CD8-positive, alpha-beta T cell (primary cell): ENCODE measurements at regions of chr4 and their contacts with region 1.

Region 1: DNA sequence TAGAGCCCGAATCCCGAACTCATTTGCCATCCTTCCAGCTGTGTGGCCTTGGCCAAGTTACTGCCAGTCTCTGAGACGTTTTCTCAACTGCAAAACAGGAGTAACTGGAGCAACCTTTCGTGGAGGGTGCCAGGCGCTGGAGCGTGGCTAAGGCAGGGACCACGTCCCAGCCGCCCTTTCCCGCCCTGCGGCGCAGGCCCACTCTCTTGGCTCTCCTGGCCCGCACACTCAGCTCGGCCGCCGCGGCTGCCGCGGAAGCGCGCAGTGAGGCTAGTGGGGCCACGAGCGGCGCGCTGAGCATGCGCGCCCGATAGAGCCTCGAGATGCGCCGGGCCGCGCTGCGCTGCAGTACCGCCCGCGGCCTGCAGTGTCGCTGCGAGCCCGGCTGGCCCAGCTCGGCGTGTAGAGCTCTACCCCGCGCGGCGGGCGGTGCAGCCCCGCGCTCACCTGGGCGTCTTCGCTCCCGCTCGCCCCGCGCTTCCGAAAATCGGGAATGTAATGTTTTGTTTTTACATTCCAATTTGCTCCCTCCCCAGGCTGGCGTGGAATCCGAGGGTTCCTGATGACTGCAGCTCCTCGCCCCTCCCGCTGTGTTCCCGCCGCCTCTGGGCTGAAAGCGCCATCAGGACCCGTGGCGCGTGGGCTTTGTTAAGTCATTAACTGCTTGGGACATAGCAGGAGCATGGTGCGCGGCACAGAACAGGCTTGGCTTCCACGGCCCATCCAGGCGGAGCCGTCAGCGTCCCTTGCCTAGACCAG is 4.0 kb upstream of the ZNF518B start:
- DNase-seq: peak; percentile 53 to 92 (median 68)
- ATAC-seq: peak; percentile 82
- H3K4me3 ChIP-seq: peak overlapping the region; percentile 43 to 55
- H3K4me3 Mint-ChIP-seq: peak overlapping the region; percentile 83
- H3K27ac ChIP-seq: no peak overlapping the region
- H3K27ac Mint-ChIP-seq: no peak overlapping the region
- H3K4me1 ChIP-seq: peaks cover 20% of the 10 kb centered on the region
- H3K4me1 Mint-ChIP-seq: peaks cover 28% of the 10 kb centered on the region
- H3K27me3 ChIP-seq: peaks cover 0 to 11% of the 10 kb centered on the region in 2 experiments
- H3K27me3 Mint-ChIP-seq: peaks cover 29% of the 10 kb centered on the region
- CTCF ChIP-seq: peak; percentile 99

Region 2: DNA sequence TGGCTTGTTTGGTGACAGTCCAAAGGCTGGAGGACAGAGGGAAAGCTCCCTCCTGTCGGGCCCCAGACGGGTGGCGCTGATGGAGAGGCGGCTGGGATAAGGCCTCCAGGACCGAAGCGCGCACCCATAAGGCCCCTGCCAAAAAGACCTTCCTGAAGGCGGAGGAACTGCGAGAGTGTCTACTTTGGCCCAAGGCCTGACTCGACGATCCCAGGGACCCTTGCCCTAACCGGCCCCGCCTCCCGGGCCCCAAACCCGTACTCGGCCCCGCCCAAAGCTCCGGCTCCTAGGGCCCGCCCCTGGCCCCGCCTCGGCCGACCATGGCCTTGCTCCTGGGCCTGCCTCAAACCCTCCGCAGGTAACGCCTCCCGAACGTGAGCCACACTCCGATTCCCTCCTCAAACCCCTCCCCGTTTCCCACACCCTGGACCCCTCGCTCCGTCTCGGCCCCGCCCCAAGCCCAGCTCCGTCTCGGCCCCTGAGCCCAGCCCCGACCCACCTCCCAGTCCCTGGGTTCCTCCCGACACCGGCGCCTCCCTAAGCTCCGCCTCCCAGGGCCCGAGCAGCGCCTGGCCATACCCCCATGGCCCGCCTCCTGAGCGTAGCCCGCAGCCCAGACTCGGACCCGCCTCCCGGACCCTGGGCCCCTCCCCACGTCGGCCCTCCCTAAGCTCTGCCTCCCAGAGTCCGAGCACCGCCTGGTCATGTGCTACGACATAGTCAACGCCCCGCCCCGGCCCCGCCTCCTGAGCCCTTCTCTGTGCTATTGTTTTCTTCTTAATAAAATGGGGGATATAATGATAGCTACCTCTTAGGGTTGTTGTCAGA is 769.8 kb before region 1 on chr4:
- CTCF ChIA-PET with region 1: no interaction called
- POLR2A ChIA-PET with region 1: no interaction called
- intact Hi-C with region 1: loop called in 1 of 2 experiments (anchors 2 kb)
- DNase-seq: peak; percentile 79 to 96 (median 89)
- ATAC-seq: peak; percentile 99
- H3K4me3 ChIP-seq: peak overlapping the region; percentile 72 to 75
- H3K4me3 Mint-ChIP-seq: peak overlapping the region; percentile 88
- H3K27ac ChIP-seq: peak overlapping the region; percentile 55 to 76
- H3K27ac Mint-ChIP-seq: peak overlapping the region; percentile 76
- H3K4me1 ChIP-seq: peaks cover 8% of the 10 kb centered on the region
- H3K4me1 Mint-ChIP-seq: peaks cover 28% of the 10 kb centered on the region
- H3K27me3 ChIP-seq: no peaks in the 10 kb centered on the region
- H3K27me3 Mint-ChIP-seq: no peaks in the 10 kb centered on the region
- CTCF ChIP-seq: no peak

Region 3: DNA sequence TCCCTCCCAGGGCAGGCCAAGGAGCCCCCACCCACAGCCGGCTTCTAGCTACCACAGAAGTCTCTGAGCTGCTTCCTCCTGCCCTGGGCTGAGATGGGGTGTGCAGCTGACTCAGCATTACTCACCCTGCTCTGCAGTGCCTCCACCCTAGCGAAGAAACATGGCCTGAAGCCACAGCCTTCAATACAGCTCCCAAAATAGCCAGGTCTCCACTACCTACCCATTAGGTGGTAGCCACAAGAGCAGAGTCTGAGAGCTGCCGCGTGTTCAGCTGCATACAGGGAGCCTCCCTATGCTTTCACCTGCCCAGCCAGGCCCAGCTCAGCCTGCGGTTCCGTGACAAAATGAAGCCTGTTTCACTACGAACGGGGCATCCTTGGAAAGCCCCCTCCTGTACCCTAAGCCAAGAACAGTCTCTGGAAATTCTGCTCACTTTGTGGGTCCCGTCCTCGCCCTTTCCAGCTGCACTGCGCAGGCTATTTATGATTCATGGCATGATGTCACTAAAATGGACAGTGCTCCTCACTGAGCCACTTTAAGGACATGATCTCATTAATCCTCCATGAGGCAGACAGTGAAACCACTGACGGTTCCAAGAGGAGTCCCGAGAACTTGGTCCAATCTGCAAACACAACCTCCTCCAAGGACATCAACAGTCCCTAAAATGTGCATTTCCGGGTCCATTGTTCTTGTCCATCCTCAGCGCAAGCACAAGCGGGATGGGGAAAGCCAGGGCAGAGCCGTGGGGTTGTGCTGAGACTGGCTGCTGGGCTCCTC is 364.9 kb before region 1 on chr4:
- CTCF ChIA-PET with region 1: no interaction called
- POLR2A ChIA-PET with region 1: no interaction called
- intact Hi-C with region 1: loop called in 1 of 2 experiments (anchors 5 kb)
- DNase-seq: peak; percentile 46 to 90 (median 83)
- ATAC-seq: peak; percentile 75
- H3K4me3 ChIP-seq: no peak overlapping the region
- H3K4me3 Mint-ChIP-seq: peak overlapping the region; percentile 37
- H3K27ac ChIP-seq: peak overlapping the region; percentile 38 to 70
- H3K27ac Mint-ChIP-seq: peak overlapping the region; percentile 87
- H3K4me1 ChIP-seq: peaks cover 94% of the 10 kb centered on the region
- H3K4me1 Mint-ChIP-seq: peaks cover 94% of the 10 kb centered on the region
- H3K27me3 ChIP-seq: no peaks in the 10 kb centered on the region
- H3K27me3 Mint-ChIP-seq: no peaks in the 10 kb centered on the region
- CTCF ChIP-seq: no peak

Region 4: GRCh38 chr4:10164877-10165283 is 296.4 kb before region 1 on chr4:
- CTCF ChIA-PET with region 1: interaction called, 5 read pairs
- POLR2A ChIA-PET with region 1: interaction called, 4 read pairs
- intact Hi-C with region 1: loop called in 1 of 2 experiments (anchors 5 kb)
- DNase-seq: peak in 2 of 9 experiments; percentile 17 to 19
- ATAC-seq: no peak
- H3K4me3 ChIP-seq: no peak overlapping the region
- H3K4me3 Mint-ChIP-seq: no peak overlapping the region
- H3K27ac ChIP-seq: no peak overlapping the region
- H3K27ac Mint-ChIP-seq: no peak overlapping the region
- H3K4me1 ChIP-seq: peaks cover 29% of the 10 kb centered on the region
- H3K4me1 Mint-ChIP-seq: peaks cover 33% of the 10 kb centered on the region
- H3K27me3 ChIP-seq: no peaks in the 10 kb centered on the region
- H3K27me3 Mint-ChIP-seq: no peaks in the 10 kb centered on the region
- CTCF ChIP-seq: peak; percentile 49

Region 5: GRCh38 chr4:10421344-10422055 is 39.8 kb before region 1 on chr4:
- CTCF ChIA-PET with region 1: interaction called, 6 read pairs
- POLR2A ChIA-PET with region 1: interaction called, 12 read pairs
- intact Hi-C with region 1: loop called (anchors 2 to 5 kb)
- DNase-seq: peak in 3 of 9 experiments; percentile 17 to 63 (median 56)
- ATAC-seq: peak; percentile 85
- H3K4me3 ChIP-seq: no peak overlapping the region
- H3K4me3 Mint-ChIP-seq: peak overlapping the region; percentile 58
- H3K27ac ChIP-seq: peak overlapping the region in 1 of 2 experiments; percentile 43
- H3K27ac Mint-ChIP-seq: peak overlapping the region; percentile 91
- H3K4me1 ChIP-seq: peaks cover 29% of the 10 kb centered on the region
- H3K4me1 Mint-ChIP-seq: peaks cover 25% of the 10 kb centered on the region
- H3K27me3 ChIP-seq: no peaks in the 10 kb centered on the region
- H3K27me3 Mint-ChIP-seq: no peaks in the 10 kb centered on the region
- CTCF ChIP-seq: no peak

Region 6: DNA sequence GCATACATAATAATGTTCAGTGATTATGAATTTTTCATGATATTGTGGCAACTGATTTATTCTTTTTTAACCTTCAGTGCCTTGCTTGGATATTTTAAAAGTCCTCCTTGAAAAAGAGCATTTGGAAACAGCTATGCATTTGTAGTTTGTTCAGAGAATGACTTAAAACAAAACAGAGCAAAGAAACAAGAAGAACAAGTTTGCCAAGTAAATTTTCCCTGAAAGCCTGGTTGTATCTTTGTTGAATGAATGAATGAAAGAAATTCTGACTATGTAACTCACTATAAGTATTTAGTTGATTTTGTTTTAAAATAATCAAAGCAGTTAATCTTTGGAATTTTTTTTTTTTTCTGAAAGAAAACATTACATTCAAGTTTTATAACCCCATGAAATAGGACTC is 56.4 kb after region 1 on chr4:
- CTCF ChIA-PET with region 1: no interaction called
- POLR2A ChIA-PET with region 1: no interaction called
- intact Hi-C with region 1: no loop called
- DNase-seq: no peak
- ATAC-seq: no peak
- H3K4me3 ChIP-seq: no peak overlapping the region
- H3K4me3 Mint-ChIP-seq: no peak overlapping the region
- H3K27ac ChIP-seq: no peak overlapping the region
- H3K27ac Mint-ChIP-seq: no peak overlapping the region
- H3K4me1 ChIP-seq: no peaks in the 10 kb centered on the region
- H3K4me1 Mint-ChIP-seq: no peaks in the 10 kb centered on the region
- H3K27me3 ChIP-seq: no peaks in the 10 kb centered on the region
- H3K27me3 Mint-ChIP-seq: peaks cover 1% of the 10 kb centered on the region
- CTCF ChIP-seq: no peak

Region 7: GRCh38 chr4:10535912-10536311 is 74.6 kb after region 1 on chr4:
- CTCF ChIA-PET with region 1: interaction called, 23 read pairs
- POLR2A ChIA-PET with region 1: no interaction called
- intact Hi-C with region 1: loop called (anchors 1 to 5 kb)
- DNase-seq: no peak
- ATAC-seq: no peak
- H3K4me3 ChIP-seq: no peak overlapping the region
- H3K4me3 Mint-ChIP-seq: no peak overlapping the region
- H3K27ac ChIP-seq: no peak overlapping the region
- H3K27ac Mint-ChIP-seq: no peak overlapping the region
- H3K4me1 ChIP-seq: no peaks in the 10 kb centered on the region
- H3K4me1 Mint-ChIP-seq: no peaks in the 10 kb centered on the region
- H3K27me3 ChIP-seq: no peaks in the 10 kb centered on the region
- H3K27me3 Mint-ChIP-seq: peaks cover 2% of the 10 kb centered on the region
- CTCF ChIP-seq: no peak

Region 8: DNA sequence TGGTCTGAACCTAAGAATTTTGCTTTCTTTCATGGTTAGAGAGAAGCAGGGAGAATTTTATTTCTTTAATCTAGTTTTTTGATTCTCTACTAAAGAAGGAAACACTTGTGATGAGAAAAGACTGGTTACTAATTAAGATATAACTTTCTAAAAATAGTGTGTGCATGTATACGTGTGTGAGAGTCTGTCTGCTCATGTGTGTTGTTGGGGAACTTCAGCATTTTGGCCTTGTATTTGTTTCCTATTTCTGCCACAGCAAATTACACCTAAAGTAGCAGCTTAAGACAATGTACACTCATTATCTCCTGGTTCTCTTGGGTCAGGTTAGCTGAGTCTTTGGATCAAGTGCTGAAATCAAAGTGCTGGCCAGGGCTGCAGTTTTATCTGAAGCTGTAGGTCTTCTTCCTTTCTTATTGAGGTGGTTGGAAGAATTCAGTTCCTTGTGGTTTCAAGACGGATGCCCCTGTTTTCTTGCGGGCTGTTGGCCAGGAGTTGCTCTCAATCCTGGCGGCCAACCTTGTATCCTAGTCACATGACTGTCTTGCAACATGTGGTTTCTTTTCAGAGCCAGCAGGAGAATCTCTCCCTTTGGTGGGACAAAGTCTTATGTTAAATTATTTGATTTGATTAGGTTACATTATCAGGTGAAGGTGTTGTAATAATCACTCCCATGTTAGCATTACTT is 411.7 kb after region 1 on chr4:
- CTCF ChIA-PET with region 1: no interaction called
- POLR2A ChIA-PET with region 1: no interaction called
- intact Hi-C with region 1: no loop called
- DNase-seq: no peak
- ATAC-seq: no peak
- H3K4me3 ChIP-seq: no peak overlapping the region
- H3K4me3 Mint-ChIP-seq: no peak overlapping the region
- H3K27ac ChIP-seq: no peak overlapping the region
- H3K27ac Mint-ChIP-seq: no peak overlapping the region
- H3K4me1 ChIP-seq: no peaks in the 10 kb centered on the region
- H3K4me1 Mint-ChIP-seq: no peaks in the 10 kb centered on the region
- H3K27me3 ChIP-seq: no peaks in the 10 kb centered on the region
- H3K27me3 Mint-ChIP-seq: no peaks in the 10 kb centered on the region
- CTCF ChIP-seq: no peak

Region 9: DNA sequence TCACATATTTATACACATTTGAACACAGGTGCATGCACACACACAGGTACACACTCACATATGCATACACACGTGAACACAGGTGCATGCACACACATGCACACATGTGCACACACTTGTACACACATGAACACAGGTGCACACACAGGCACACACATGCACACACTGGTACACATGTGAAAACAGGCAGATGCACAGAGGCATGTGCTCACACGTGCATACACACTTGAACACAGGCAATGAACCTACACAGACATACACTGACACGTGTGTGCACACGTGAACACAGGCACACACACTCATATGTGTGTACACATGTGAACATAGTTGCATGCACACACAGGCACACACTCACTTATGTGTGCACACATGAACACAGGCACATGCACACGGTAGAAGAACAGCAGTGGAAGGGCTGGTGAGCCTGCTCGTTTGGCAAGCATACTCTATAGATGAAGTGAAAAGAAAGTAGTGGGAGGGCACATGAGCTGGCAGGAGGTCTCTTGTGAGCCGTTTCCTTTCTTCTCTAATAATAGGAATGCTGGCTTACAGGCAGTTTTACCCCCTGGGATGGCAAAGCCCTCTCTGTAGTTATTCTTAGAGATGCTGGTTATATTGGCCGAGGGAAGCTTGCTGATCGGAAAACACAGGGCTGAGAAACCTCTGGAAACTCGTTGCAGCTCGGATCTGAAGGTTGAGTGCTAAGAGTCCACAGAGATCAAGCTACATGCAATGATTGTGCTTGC is 502.9 kb after region 1 on chr4:
- CTCF ChIA-PET with region 1: no interaction called
- POLR2A ChIA-PET with region 1: no interaction called
- intact Hi-C with region 1: no loop called
- DNase-seq: no peak
- ATAC-seq: no peak
- H3K4me3 ChIP-seq: no peak overlapping the region
- H3K4me3 Mint-ChIP-seq: no peak overlapping the region
- H3K27ac ChIP-seq: no peak overlapping the region
- H3K27ac Mint-ChIP-seq: no peak overlapping the region
- H3K4me1 ChIP-seq: no peaks in the 10 kb centered on the region
- H3K4me1 Mint-ChIP-seq: no peaks in the 10 kb centered on the region
- H3K27me3 ChIP-seq: no peaks in the 10 kb centered on the region
- H3K27me3 Mint-ChIP-seq: no peaks in the 10 kb centered on the region
- CTCF ChIP-seq: no peak

Region 10: GRCh38 chr4:11471618-11472017 is 1010.3 kb after region 1 on chr4:
- CTCF ChIA-PET with region 1: no interaction called
- POLR2A ChIA-PET with region 1: no interaction called
- intact Hi-C with region 1: loop called in 1 of 2 experiments (anchors 5 kb)
- DNase-seq: peak; percentile 4 to 86 (median 58)
- ATAC-seq: peak; percentile 96
- H3K4me3 ChIP-seq: peak overlapping the region; percentile 37 to 67
- H3K4me3 Mint-ChIP-seq: peak overlapping the region; percentile 79
- H3K27ac ChIP-seq: peak overlapping the region; percentile 70 to 82
- H3K27ac Mint-ChIP-seq: peak overlapping the region; percentile 96
- H3K4me1 ChIP-seq: peaks cover 28% of the 10 kb centered on the region
- H3K4me1 Mint-ChIP-seq: peaks cover 42% of the 10 kb centered on the region
- H3K27me3 ChIP-seq: no peaks in the 10 kb centered on the region
- H3K27me3 Mint-ChIP-seq: no peaks in the 10 kb centered on the region
- CTCF ChIP-seq: no peak

Region 11: GRCh38 chr4:12446657-12447185 is 1985.5 kb after region 1 on chr4:
- CTCF ChIA-PET with region 1: no interaction called
- POLR2A ChIA-PET with region 1: no interaction called
- intact Hi-C with region 1: no loop called
- DNase-seq: no peak
- ATAC-seq: no peak
- H3K4me3 ChIP-seq: no peak overlapping the region
- H3K4me3 Mint-ChIP-seq: no peak overlapping the region
- H3K27ac ChIP-seq: no peak overlapping the region
- H3K27ac Mint-ChIP-seq: no peak overlapping the region
- H3K4me1 ChIP-seq: no peaks in the 10 kb centered on the region
- H3K4me1 Mint-ChIP-seq: no peaks in the 10 kb centered on the region
- H3K27me3 ChIP-seq: no peaks in the 10 kb centered on the region
- H3K27me3 Mint-ChIP-seq: no peaks in the 10 kb centered on the region
- CTCF ChIP-seq: no peak